ENCODE measurements at regions of chr20 and their contacts with region 1.

Region 1: DNA sequence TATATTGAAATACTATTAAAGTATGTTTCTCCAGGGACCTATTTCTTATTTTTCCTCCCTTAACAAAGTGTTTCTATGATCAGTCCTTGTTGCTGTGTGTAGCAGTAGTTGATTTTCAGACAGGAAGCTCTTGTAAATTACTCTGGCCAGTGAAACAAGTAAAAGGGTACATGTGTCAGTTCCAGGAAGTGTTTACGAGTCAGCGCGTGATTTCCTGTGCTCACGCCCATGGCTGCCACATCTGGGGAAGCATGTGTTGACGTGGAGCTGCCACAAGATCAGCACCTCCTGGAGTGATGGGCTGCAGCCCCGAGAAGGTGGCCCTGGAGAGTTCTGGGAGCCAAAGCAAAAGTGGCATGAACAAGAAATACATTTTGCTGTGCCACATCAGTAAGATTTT is 38.6 kb upstream of the GGTLC1 start:
- DNase-seq: peak; percentile 45 to 93 (median 87)
- ATAC-seq: peak; percentile 99
- H3K4me3 ChIP-seq: peak overlapping the region; percentile 39
- H3K4me3 Mint-ChIP-seq: peak overlapping the region; percentile 26 to 81 (median 71)
- H3K27ac ChIP-seq: peak overlapping the region; percentile 83
- H3K27ac Mint-ChIP-seq: peak overlapping the region; percentile 95 to 99 (median 97)
- H3K4me1 ChIP-seq: peaks cover 17 to 29% of the 10 kb centered on the region in 2 donors
- H3K4me1 Mint-ChIP-seq: peaks cover 20 to 76% (median 62%) of the 10 kb centered on the region in 7 donors
- H3K27me3 ChIP-seq: no peaks in the 10 kb centered on the region
- H3K27me3 Mint-ChIP-seq: no peaks in the 10 kb centered on the region

Region 2: DNA sequence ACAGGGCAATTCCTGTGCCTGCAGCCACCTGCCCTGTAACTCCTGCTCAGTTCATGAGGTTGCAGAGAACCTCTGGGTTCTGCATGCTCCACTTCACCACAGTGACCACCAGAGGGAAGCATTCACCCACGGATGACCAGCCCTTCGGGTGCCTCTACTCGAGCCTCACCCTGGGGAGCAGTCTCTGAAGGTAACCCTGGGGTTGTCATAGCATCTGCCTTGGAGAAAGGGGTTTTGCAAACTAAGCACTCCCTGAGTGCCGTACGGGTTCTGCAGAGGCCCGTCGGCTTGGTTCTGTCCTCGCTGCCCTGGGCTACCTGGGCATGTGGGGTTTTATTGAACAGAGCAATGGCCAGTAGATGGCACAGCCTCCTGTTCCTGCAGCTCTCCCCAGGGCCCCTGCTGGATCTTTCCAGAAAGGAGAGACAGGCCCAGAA is 137.4 kb before region 1 on chr20:
- CTCF ChIA-PET with region 1: no interaction called
- POLR2A ChIA-PET with region 1: no interaction called
- intact Hi-C with region 1: no loop called
- DNase-seq: peak; percentile 49 to 79 (median 67)
- ATAC-seq: peak; percentile 94
- H3K4me3 ChIP-seq: no peak overlapping the region
- H3K4me3 Mint-ChIP-seq: no peak overlapping the region
- H3K27ac ChIP-seq: no peak overlapping the region
- H3K27ac Mint-ChIP-seq: no peak overlapping the region
- H3K4me1 ChIP-seq: no peaks in the 10 kb centered on the region
- H3K4me1 Mint-ChIP-seq: peaks cover 0 to 4% (median 0%) of the 10 kb centered on the region in 7 donors
- H3K27me3 ChIP-seq: no peaks in the 10 kb centered on the region
- H3K27me3 Mint-ChIP-seq: peaks cover 3 to 17% (median 10%) of the 10 kb centered on the region in 5 donors

Region 3: GRCh38 chr20:23907579-23907978 is 119.7 kb before region 1 on chr20:
- CTCF ChIA-PET with region 1: no interaction called
- POLR2A ChIA-PET with region 1: no interaction called
- intact Hi-C with region 1: loop called in 1 of 2 experiments (anchors 1 kb)
- DNase-seq: no peak
- ATAC-seq: no peak
- H3K4me3 ChIP-seq: no peak overlapping the region
- H3K4me3 Mint-ChIP-seq: no peak overlapping the region
- H3K27ac ChIP-seq: no peak overlapping the region
- H3K27ac Mint-ChIP-seq: no peak overlapping the region
- H3K4me1 ChIP-seq: peaks cover 0 to 2% of the 10 kb centered on the region in 2 donors
- H3K4me1 Mint-ChIP-seq: peaks cover 0 to 33% (median 8%) of the 10 kb centered on the region in 7 donors
- H3K27me3 ChIP-seq: no peaks in the 10 kb centered on the region
- H3K27me3 Mint-ChIP-seq: peaks cover 0 to 24% (median 6%) of the 10 kb centered on the region in 5 donors

Region 4: DNA sequence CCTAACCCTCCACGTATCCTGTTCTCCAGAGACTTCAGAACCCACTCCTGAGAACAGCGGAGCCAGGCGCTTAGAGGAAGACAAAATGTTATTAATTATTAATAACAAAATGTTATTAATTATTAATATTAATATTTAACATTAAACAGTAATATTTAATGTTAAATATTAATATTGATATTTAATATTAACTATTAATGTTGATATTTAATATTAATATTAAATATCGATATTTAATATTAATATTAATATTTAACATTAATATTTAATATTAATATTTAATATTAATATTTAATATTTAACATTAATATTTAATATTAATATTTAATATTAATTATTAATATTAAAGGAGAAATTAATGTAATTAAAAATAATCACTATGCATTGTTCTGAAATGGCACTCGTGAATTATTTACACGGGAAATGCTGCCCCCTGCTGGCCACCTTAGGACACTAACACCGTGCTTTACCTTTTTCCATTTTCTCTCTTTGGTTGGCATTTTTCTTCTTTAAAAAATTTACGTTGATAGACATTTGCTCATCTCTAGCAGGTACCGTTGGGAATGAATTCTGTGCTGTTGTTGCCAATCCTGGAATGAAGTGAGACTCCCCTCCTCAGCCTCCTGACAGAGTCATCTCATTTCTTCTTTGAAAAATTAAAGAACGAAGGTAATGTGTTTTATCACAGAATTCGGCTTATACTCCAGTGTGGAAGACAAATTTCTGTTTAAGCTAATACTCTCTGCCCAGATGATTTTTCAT is 31.1 kb before region 1 on chr20:
- CTCF ChIA-PET with region 1: interaction called, 3 read pairs
- POLR2A ChIA-PET with region 1: interaction called, 4 read pairs
- intact Hi-C with region 1: loop called in 1 of 2 experiments (anchors 2 kb)
- DNase-seq: peak in 7 of 9 donors; percentile 20 to 61 (median 48)
- ATAC-seq: peak; percentile 57
- H3K4me3 ChIP-seq: no peak overlapping the region
- H3K4me3 Mint-ChIP-seq: peak overlapping the region in 1 of 10 donors; percentile 24
- H3K27ac ChIP-seq: no peak overlapping the region
- H3K27ac Mint-ChIP-seq: peak overlapping the region in 2 of 9 donors; percentile 1 to 9
- H3K4me1 ChIP-seq: no peaks in the 10 kb centered on the region
- H3K4me1 Mint-ChIP-seq: peaks cover 0 to 16% (median 5%) of the 10 kb centered on the region in 7 donors
- H3K27me3 ChIP-seq: no peaks in the 10 kb centered on the region
- H3K27me3 Mint-ChIP-seq: peaks cover 0 to 34% (median 0%) of the 10 kb centered on the region in 5 donors

Region 5: GRCh38 chr20:24045621-24046318 is 18.5 kb after region 1 on chr20:
- CTCF ChIA-PET with region 1: interaction called, 4 read pairs
- POLR2A ChIA-PET with region 1: interaction called, 10 read pairs
- intact Hi-C with region 1: loop called (anchors 1 to 2 kb)
- DNase-seq: peak in 5 of 9 donors; percentile 30 to 48 (median 37)
- ATAC-seq: peak; percentile 67
- H3K4me3 ChIP-seq: peak overlapping the region; percentile 44
- H3K4me3 Mint-ChIP-seq: peak overlapping the region; percentile 31 to 78 (median 57)
- H3K27ac ChIP-seq: peak overlapping the region; percentile 60
- H3K27ac Mint-ChIP-seq: peak overlapping the region; percentile 76 to 95 (median 87)
- H3K4me1 ChIP-seq: peaks cover 12 to 37% of the 10 kb centered on the region in 2 donors
- H3K4me1 Mint-ChIP-seq: peaks cover 34 to 77% (median 64%) of the 10 kb centered on the region in 7 donors
- H3K27me3 ChIP-seq: no peaks in the 10 kb centered on the region
- H3K27me3 Mint-ChIP-seq: no peaks in the 10 kb centered on the region

Region 6: DNA sequence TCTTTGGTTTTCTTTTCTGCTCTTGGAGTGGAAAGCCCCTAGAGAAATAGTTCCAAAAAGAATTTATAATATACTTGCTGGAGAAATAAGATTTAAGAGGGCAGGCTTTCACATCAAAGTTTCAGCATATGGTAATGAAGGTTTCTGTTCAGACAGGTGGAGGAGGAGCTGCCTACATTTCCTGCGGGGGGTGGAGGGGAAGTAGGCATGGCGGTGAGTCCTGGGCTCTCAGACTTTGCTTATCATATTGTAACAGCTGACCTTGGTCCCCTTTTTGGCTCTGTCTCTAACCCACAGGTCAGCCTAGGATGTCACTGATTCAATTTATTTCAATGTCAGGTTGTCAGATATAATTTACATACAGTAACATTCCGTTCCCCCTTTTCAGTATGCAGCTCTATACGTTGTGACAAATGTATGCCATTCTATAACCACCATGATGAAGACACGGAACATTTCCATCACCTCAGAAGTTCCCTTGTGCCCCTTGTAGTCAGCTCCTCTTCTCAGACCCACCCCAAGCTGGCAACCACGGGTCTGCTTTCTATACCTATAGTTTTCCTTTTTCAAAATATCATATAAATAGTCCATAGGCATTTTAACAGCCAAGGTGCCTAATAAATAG is 39.0 kb after region 1 on chr20:
- CTCF ChIA-PET with region 1: interaction called, 3 read pairs
- POLR2A ChIA-PET with region 1: interaction called, 11 read pairs
- intact Hi-C with region 1: loop called (anchors 5 kb)
- DNase-seq: peak in 7 of 9 donors; percentile 21 to 57 (median 46)
- ATAC-seq: peak; percentile 91
- H3K4me3 ChIP-seq: peak overlapping the region; percentile 20
- H3K4me3 Mint-ChIP-seq: peak overlapping the region; percentile 44 to 90 (median 79)
- H3K27ac ChIP-seq: peak overlapping the region; percentile 60
- H3K27ac Mint-ChIP-seq: peak overlapping the region; percentile 0 to 94 (median 91)
- H3K4me1 ChIP-seq: peaks cover 6 to 7% of the 10 kb centered on the region in 2 donors
- H3K4me1 Mint-ChIP-seq: peaks cover 11 to 27% (median 18%) of the 10 kb centered on the region in 7 donors
- H3K27me3 ChIP-seq: no peaks in the 10 kb centered on the region
- H3K27me3 Mint-ChIP-seq: peaks cover 0 to 6% (median 0%) of the 10 kb centered on the region in 5 donors

Region 7: GRCh38 chr20:24948939-24949679 is 921.9 kb after region 1 on chr20 and contains the start of gene CST7:
- CTCF ChIA-PET with region 1: no interaction called
- POLR2A ChIA-PET with region 1: no interaction called
- intact Hi-C with region 1: loop called in 1 of 2 experiments (anchors 2 kb)
- DNase-seq: peak; percentile 33 to 85 (median 77)
- ATAC-seq: peak; percentile 90
- H3K4me3 ChIP-seq: peak within 1 kb of the TSS; percentile 66
- H3K4me3 Mint-ChIP-seq: peak within 1 kb of the TSS in 9 of 10 donors; percentile 27 to 94 (median 54)
- H3K27ac ChIP-seq: no peak within 1 kb of the TSS
- H3K27ac Mint-ChIP-seq: peak within 1 kb of the TSS; percentile 21 to 94 (median 80)
- H3K4me1 ChIP-seq: peaks cover 6 to 33% of the 10 kb centered on the region in 2 donors
- H3K4me1 Mint-ChIP-seq: peaks cover 12 to 75% (median 25%) of the 10 kb centered on the region in 7 donors
- H3K27me3 ChIP-seq: no peaks in the 10 kb centered on the region
- H3K27me3 Mint-ChIP-seq: no peaks in the 10 kb centered on the region
- total RNA-seq, gene CST7: 1.4 to 74.9 (median 11.5) TPM